WTC11 (cell line): ENCODE measurements at regions of chr5 and their contacts with region 1.

Region 1: DNA sequence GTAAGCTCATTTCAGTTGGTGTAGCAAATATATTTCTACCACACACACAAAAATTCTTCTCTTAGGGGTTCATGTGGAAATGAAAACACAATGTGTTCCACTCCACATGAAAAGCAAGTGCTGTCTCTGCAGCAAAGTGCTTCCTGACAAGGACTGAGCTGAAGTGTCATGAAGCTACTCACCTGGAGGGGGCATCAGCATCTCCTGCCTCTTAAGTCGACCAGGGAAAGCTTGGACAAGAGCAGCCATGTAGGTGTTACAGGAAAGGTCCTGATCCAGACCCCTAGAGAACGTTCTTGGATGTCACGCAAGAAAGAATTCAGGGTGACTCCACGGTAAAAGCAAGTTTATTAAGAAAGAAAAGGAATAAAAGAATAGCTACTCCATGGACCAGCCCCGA is 62.8 kb downstream of the SV2C start:
- DNase-seq: peak; percentile 50
- ATAC-seq: peak; percentile 86
- H3K4me3 Mint-ChIP-seq: no peak overlapping the region
- H3K27ac Mint-ChIP-seq: no peak overlapping the region
- H3K4me1 Mint-ChIP-seq: peaks cover 19% of the 10 kb centered on the region
- H3K27me3 Mint-ChIP-seq: peaks cover 30% of the 10 kb centered on the region
- CTCF ChIP-seq: no peak

Region 2: DNA sequence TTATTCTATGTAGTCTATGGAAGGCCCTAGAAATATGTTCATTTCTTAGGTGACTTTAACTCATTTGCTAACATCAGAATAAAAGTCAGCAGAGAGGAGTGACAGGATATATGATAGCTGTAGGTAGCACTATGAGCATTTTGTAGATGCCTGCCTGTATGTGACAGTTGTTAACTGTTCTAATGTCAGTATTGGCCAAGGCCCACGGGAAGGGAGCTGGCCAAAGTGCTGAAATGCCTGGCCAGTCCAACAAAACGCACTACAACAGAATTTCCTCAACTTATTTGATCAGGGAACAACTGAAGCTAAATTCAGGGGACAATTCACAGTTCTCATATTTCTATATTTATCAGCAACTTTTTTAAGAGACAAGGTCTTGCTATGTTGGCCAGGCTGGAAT is 41.9 kb before region 1 on chr5:
- CTCF ChIA-PET with region 1: interaction called, 15 read pairs
- POLR2A ChIA-PET with region 1: no interaction called
- DNase-seq: peak; percentile 65
- ATAC-seq: peak; percentile 79
- H3K4me3 Mint-ChIP-seq: no peak overlapping the region
- H3K27ac Mint-ChIP-seq: no peak overlapping the region
- H3K4me1 Mint-ChIP-seq: no peaks in the 10 kb centered on the region
- H3K27me3 Mint-ChIP-seq: no peaks in the 10 kb centered on the region
- CTCF ChIP-seq: no peak

Region 3: GRCh38 chr5:76245590-76245989 is 99.6 kb after region 1 on chr5:
- CTCF ChIA-PET with region 1: no interaction called
- POLR2A ChIA-PET with region 1: no interaction called
- DNase-seq: no peak
- ATAC-seq: no peak
- H3K4me3 Mint-ChIP-seq: no peak overlapping the region
- H3K27ac Mint-ChIP-seq: no peak overlapping the region
- H3K4me1 Mint-ChIP-seq: no peaks in the 10 kb centered on the region
- H3K27me3 Mint-ChIP-seq: no peaks in the 10 kb centered on the region; the same call in 1 of the 2 replicates
- CTCF ChIP-seq: no peak